ENCODE measurements at regions of chr5 and their contacts with region 1.

Region 1: DNA sequence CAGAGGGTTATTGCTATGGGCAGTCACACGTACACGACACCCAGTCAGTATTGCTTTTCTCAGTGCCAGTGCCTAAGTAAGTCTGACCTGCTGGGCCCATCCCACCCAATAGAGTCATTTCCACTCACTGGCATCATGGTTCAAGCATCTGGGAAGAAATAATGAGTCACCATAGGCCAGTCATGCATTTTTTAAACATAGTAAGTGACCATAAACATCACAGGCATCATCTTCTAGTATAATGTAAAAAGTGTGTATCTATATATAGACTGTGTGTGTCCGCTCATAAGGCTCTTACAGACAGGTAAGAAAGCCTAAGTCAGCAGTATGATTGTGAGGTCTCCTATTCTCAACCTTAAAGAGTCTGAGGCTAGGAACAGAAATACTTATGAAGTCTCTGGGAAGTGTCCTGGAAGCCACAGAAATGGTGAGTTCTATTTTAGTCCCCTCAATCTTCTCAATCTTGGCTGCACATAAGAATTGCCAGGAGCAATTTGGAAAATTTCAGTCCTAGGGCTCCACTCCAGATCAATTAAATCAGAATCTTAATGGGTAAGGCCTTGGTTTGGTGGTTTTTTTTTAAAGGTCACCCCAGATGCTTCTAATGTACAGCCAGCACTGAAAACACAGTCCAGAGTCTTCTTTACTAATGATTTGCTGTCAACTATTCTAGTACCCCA is 65.2 kb downstream of the ZNF366 start:
- DNase-seq: peak in 1 of 2 donors; percentile 71
- ATAC-seq: peak; percentile 57
- H3K4me3 ChIP-seq: no peak overlapping the region
- H3K27ac ChIP-seq: peak overlapping the region; percentile 49 to 90
- H3K4me1 ChIP-seq: peaks cover 0 to 3% of the 10 kb centered on the region in 2 donors
- H3K27me3 ChIP-seq: no peaks in the 10 kb centered on the region

Region 2: DNA sequence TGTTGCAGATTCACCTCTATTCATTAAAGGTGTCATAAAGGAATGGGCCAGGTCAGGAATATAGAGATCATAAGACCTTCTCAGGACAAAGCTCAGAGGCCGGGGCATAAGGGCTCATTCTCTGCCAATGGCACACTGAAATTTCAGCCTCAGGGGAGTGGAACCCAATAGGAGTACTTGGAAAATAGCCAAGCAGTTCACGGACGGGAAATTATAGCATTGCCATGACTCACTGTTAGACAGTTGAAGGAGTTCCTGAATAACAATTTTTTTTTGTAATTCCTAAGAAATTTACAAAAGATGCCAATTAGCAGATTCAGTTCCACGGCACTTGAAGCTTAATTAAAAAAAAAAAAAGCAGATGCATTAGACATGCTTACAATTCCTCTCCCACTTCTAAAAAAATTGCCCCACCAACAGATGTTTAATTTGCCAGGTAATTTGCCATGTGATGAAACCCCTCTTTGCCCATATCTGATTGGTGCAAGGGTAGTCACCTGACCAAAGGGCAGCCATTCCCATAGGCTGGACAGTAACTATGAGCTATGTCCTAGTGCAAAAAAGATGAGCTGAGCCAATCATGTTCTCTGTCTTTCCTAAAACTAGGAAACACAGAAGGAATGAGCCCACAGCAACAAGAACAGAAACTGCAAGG is 63.2 kb before region 1 on chr5:
- intact Hi-C with region 1: loop called in 1 of 2 experiments (anchors 2 kb)
- DNase-seq: peak in 1 of 2 donors; percentile 68
- ATAC-seq: peak; percentile 55
- H3K4me3 ChIP-seq: no peak overlapping the region
- H3K27ac ChIP-seq: no peak overlapping the region
- H3K4me1 ChIP-seq: peaks cover 3 to 4% of the 10 kb centered on the region in 2 donors
- H3K27me3 ChIP-seq: no peaks in the 10 kb centered on the region

Region 3: DNA sequence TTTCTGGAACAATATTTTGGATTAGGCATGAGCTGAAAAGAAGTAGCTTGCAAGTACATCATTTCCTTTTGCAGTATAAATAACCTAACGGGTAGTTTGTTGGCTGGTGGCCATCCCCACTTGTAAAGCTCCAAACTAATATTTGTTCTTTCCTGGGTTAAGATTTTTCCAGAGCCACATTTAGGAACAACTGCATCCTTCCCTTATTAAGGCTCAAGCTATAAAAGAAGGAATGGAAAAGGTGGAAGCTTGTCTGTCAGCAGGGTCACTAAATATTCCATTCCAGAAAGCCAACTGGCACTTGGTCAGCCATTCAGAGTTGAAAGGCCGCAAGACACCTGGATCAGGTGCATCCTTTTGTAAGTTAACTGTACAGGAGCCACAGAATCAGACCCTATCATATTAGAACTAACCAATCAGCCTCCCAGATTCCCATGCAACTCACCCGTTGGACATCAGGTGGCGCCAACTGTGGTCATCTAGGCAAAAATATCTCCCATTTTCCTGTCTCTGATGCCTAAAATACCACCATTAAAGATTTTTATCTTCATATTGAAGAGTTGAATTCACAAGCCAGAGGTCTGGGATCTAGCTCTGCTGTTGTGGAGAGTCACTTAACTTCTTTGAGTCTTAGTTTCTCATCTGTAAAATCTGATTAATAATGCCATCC is 38.9 kb before region 1 on chr5:
- intact Hi-C with region 1: loop called (anchors 2 to 5 kb)
- DNase-seq: peak in 1 of 2 donors; percentile 81
- ATAC-seq: peak; percentile 53
- H3K4me3 ChIP-seq: no peak overlapping the region
- H3K27ac ChIP-seq: peak overlapping the region; percentile 73 to 99
- H3K4me1 ChIP-seq: peaks cover 0 to 6% of the 10 kb centered on the region in 2 donors
- H3K27me3 ChIP-seq: no peaks in the 10 kb centered on the region

Region 4: GRCh38 chr5:72510610-72511181 is 68.7 kb after region 1 on chr5:
- intact Hi-C with region 1: loop called in 1 of 2 experiments (anchors 2 kb)
- DNase-seq: peak; percentile 85
- ATAC-seq: peak; percentile 61
- H3K4me3 ChIP-seq: no peak overlapping the region
- H3K27ac ChIP-seq: peak overlapping the region; percentile 46 to 67
- H3K4me1 ChIP-seq: peaks cover 0 to 1% of the 10 kb centered on the region in 2 donors
- H3K27me3 ChIP-seq: no peaks in the 10 kb centered on the region